Ovary (tissue), 10 donors: ENCODE measurements at regions of chr22 and their contacts with region 1.

Region 1: GRCh38 chr22:24525416-24526037 is 29.4 kb downstream of the GUCD1 start:
- DNase-seq: peak; percentile 65 to 79 (median 68)
- H3K4me3 ChIP-seq: no peak overlapping the region
- H3K27ac ChIP-seq: no peak overlapping the region
- H3K4me1 ChIP-seq: peaks cover 1% of the 10 kb centered on the region
- H3K27me3 ChIP-seq: no peaks in the 10 kb centered on the region
- CTCF ChIP-seq: peak; percentile 44 to 74 (median 55)
- EP300 ChIP-seq: no peak
- POLR2A ChIP-seq: no peak

Region 2: DNA sequence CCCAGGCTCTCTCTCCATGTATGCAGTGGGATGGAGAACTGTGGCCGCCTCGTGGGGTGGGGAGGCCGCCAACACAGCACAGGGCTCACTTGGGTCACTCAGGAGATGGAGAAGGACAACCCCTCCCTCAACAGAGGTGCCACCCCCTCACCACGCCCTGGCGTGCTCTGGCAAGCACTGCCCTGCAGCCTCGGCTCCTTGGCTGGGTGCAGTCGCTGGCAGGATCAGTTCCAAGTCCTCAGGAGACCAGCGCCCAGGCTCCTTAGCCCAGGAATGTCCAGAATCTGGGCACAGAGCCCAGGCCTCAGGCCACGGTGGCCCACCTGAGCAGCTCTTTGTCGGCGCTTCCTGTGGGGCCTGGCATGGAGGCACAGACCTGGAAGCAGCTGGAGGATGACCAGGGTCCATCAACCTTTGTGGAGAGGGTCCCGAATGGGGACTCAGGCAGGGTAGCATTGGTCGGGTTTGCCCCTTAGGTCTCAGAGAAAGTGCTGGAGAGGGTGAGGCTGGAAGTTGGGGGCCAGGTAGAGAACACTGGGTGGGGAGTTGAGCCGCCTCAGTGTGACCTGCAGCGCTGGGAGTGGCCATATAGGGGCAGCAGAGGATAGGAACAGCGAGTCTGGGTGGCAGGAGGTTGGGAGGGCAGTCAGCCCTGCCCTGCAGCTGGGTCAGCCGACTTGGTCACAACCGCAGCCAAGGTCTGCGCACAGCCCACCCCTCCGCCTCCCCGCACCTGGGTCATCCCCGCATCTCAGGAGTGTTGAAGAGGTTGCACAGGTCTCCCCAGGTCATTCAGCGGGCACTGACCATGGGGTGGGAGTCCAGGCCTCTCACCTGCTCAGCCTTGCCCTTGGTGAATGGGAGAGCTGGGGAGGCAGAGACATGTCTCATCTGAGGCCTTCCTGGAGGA is 336.0 kb before region 1 on chr22:
- intact Hi-C with region 1: loop called in 1 of 4 experiments (anchors 5 kb)
- DNase-seq: peak; percentile 72 to 84 (median 80)
- H3K4me3 ChIP-seq: no peak overlapping the region
- H3K27ac ChIP-seq: no peak overlapping the region
- H3K4me1 ChIP-seq: peaks cover 5% of the 10 kb centered on the region
- H3K27me3 ChIP-seq: no peaks in the 10 kb centered on the region
- CTCF ChIP-seq: peak; percentile 75 to 97 (median 91)
- EP300 ChIP-seq: no peak
- POLR2A ChIP-seq: peak; percentile 32

Region 3: GRCh38 chr22:24225951-24226350 is 299.6 kb before region 1 on chr22:
- intact Hi-C with region 1: no loop called
- DNase-seq: no peak
- H3K4me3 ChIP-seq: no peak overlapping the region
- H3K27ac ChIP-seq: no peak overlapping the region
- H3K4me1 ChIP-seq: no peaks in the 10 kb centered on the region
- H3K27me3 ChIP-seq: no peaks in the 10 kb centered on the region
- CTCF ChIP-seq: no peak
- EP300 ChIP-seq: no peak
- POLR2A ChIP-seq: no peak

Region 4: GRCh38 chr22:24325105-24325757 is 200.3 kb before region 1 on chr22:
- intact Hi-C with region 1: loop called in 2 of 4 experiments (anchors 10 kb)
- DNase-seq: no peak
- H3K4me3 ChIP-seq: no peak overlapping the region
- H3K27ac ChIP-seq: no peak overlapping the region
- H3K4me1 ChIP-seq: no peaks in the 10 kb centered on the region
- H3K27me3 ChIP-seq: no peaks in the 10 kb centered on the region
- CTCF ChIP-seq: peak; percentile 8 to 38 (median 27)
- EP300 ChIP-seq: no peak
- POLR2A ChIP-seq: no peak

Region 5: DNA sequence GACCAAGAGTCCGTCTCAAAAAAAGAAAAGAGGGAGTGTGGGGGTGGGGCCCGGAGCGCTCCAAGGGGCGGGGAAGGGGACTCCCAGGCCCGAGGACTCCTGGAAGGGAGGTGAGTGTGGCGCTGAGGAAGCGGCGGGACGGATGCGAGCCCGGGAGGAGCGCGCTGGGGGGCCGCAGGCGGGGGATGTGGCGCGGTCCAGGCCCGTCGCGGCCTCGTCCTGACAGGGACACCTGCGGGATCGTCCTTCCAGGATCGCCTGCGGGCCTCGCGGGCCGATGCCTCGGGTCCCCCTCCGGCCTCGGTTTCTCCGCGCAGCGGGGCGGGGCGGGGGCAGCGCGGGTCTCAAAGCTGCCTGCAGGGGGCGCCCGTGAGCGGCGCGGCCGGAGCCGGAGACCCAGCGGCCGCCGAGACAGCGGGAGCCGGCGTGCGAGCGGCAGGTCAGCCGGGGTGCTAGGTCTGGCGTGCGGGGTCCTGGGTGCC is 102.0 kb before region 1 on chr22:
- intact Hi-C with region 1: loop called in 3 of 4 experiments (anchors 1 to 5 kb)
- DNase-seq: peak; percentile 49 to 80 (median 63)
- H3K4me3 ChIP-seq: peak overlapping the region; percentile 29
- H3K27ac ChIP-seq: no peak overlapping the region
- H3K4me1 ChIP-seq: peaks cover 1% of the 10 kb centered on the region
- H3K27me3 ChIP-seq: no peaks in the 10 kb centered on the region
- CTCF ChIP-seq: peak; percentile 85 to 88 (median 86)
- EP300 ChIP-seq: no peak
- POLR2A ChIP-seq: no peak

Region 6: GRCh38 chr22:24578355-24579257 is 53.1 kb after region 1 on chr22:
- intact Hi-C with region 1: loop called in 1 of 4 experiments (anchors 2 kb)
- DNase-seq: no peak
- H3K4me3 ChIP-seq: no peak overlapping the region
- H3K27ac ChIP-seq: no peak overlapping the region
- H3K4me1 ChIP-seq: no peaks in the 10 kb centered on the region
- H3K27me3 ChIP-seq: no peaks in the 10 kb centered on the region
- CTCF ChIP-seq: no peak
- EP300 ChIP-seq: no peak
- POLR2A ChIP-seq: no peak